ENCODE measurements at regions of chr1 and their contacts with region 1.

Region 1: GRCh38 chr1:183385340-183386144 is 32.6 kb downstream of the NMNAT2 start:
- DNase-seq: no peak
- ATAC-seq: no peak

Region 2: DNA sequence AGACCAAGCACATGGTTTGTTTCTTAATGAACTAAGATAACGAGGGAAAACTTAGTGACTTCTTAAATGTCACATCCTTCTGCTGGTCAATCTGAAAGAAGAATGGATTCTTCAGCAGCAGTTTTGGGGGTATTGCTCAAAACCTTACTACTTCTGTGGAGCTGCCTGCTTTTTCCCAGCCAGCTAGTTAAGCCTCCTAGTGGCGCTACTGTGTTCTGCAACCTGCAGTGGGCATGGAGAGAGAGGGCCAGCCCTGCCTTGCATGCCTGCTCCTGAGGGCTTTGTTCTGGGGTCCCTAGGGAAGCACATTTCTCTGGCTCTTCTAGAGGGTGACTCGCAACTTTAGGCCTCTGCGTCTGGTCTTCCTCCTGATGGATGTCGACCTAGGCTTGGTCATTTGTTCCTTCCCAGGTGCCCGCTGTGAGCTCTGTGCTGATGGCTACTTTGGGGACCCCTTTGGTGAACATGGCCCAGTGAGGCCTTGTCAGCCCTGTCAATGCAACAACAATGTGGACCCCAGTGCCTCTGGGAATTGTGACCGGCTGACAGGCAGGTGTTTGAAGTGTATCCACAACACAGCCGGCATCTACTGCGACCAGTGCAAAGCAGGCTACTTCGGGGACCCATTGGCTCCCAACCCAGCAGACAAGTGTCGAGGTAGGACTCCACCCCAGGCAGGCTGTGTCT is 157.4 kb before region 1 on chr1:
- intact Hi-C with region 1: no loop called
- DNase-seq: peak; percentile 64
- ATAC-seq: peak; percentile 66

Region 3: GRCh38 chr1:183331091-183331742 is 54.3 kb before region 1 on chr1:
- intact Hi-C with region 1: no loop called
- DNase-seq: no peak
- ATAC-seq: no peak

Region 4: DNA sequence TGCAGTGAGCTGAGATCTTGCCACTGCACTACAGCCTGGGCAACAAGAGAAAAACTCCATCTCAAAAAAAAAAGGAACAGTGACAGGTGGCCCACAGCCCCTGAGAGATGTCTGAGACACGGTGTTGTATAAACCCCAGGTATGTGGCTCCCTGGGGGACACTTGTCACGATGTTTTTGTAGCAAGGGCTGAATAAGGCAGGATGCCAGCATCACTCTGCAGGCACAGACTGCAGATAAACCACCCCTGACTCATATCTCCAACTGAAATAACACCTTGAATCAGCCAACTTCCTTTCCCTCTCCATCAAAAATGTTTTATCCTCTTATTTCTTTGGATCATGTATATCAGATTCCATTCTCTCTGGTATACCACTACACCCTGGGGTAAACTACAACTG is 19.9 kb before region 1 on chr1:
- intact Hi-C with region 1: loop called (anchors 1 kb)
- DNase-seq: no peak
- ATAC-seq: no peak

Measured in sciatic nerve (tissue), 2 donors.